ENCODE measurements at regions of chr16 and their contacts with region 1.

Region 1: DNA sequence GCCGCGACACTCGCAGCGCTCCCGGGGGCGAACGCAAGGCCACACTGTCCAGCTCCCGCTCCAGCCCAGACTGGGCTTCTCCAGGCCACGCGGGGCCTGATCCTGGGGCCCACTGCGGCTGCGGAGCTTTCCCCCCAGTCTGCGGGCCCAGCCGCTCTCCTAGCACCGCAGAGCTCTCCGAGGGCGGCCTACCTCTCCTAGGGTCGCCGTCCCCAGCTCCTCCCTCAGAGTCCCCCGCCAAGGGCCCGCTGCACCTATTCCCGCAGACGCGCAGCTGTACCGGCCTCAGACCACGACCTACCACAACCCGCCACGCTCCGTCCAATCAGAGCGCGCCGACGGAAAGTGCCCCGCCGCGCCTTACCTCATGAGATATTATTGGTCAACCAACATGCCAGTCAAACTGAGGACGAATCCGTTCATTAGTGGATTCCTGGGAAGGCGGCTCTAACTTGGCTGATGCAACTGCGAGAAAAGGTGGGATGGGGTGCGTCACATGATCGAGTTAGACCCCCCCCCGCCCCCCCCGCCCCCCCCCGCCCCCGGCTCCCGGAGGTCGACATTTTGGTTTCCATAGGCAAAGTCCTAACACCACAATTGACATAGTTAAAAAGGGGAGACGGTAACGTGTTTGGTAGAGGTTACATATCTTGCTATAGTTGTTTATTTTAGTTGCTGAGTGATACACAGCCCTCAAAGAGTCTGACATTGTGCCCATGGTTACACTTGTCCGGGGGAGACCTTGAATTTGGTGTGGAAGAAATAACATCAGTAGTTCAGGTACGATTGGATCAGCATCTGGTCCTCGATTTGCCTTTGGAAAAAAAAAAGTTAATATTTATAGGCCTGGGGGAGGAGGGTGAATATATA is at the start of gene AARS1:
- DNase-seq: peak; percentile 100
- H3K4me3 ChIP-seq: peak within 1 kb of the TSS; percentile 79 to 95 (median 84)
- H3K27ac ChIP-seq: peak within 1 kb of the TSS; percentile 93 to 99 (median 96)
- H3K4me1 ChIP-seq: peaks cover 13 to 34% (median 30%) of the 10 kb centered on the region in 4 donors
- H3K27me3 ChIP-seq: no peaks in the 10 kb centered on the region
- CTCF ChIP-seq: peak in 1 of 3 experiments; percentile 4
- EP300 ChIP-seq: no peak
- POLR2A ChIP-seq: peak; percentile 87
- total RNA-seq, gene AARS1: 67.1 to 101 (median 87.2) TPM

Region 2: DNA sequence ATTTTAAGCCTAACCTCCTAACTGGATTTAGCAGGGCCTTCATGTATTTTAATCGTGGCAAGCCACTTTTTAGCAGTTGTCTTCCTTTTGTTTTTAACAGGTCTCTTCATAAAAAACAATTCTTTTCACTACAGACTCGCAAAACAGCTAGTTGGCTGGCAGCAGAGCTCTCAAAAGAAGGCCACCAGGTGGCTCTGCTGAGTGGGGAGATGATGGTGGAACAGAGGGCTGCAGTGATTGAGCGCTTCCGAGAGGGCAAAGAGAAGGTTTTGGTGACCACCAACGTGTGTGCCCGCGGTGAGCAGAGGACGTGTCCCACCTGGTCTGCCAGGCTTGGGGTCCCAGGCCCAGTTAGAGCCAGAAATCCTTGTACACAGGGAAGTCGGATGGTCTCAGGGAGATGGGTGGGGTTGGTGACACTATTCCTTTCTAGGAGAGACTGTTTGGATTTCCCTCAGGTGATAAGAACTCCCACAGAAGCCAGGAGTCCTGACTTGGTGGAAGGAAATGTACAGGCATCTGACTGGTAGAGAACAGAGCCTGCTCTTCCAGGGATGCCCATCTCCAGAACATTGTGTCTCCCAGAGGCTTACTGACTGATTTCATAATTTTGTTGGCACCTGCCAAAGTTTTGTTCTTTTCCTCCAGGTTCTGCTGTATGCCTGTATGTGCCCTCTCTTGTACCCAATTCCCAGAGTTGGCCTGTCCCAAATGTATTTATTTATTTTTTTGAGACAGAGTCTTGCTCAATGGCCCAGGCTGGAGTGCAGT is 42.3 kb after region 1 on chr16:
- intact Hi-C with region 1: no loop called
- DNase-seq: no peak
- H3K4me3 ChIP-seq: no peak overlapping the region
- H3K27ac ChIP-seq: peak overlapping the region in 3 of 4 donors; percentile 12 to 68 (median 57)
- H3K4me1 ChIP-seq: peaks cover 0 to 18% (median 2%) of the 10 kb centered on the region in 4 donors
- H3K27me3 ChIP-seq: no peaks in the 10 kb centered on the region
- CTCF ChIP-seq: peak in 2 of 3 experiments; percentile 32 to 56
- EP300 ChIP-seq: no peak
- POLR2A ChIP-seq: no peak

Region 3: GRCh38 chr16:70342016-70342415 is 52.6 kb after region 1 on chr16:
- intact Hi-C with region 1: loop called (anchors 10 kb)
- DNase-seq: no peak
- H3K4me3 ChIP-seq: no peak overlapping the region
- H3K27ac ChIP-seq: no peak overlapping the region
- H3K4me1 ChIP-seq: peaks cover 4 to 14% (median 9%) of the 10 kb centered on the region in 4 donors
- H3K27me3 ChIP-seq: no peaks in the 10 kb centered on the region
- CTCF ChIP-seq: no peak
- EP300 ChIP-seq: no peak
- POLR2A ChIP-seq: no peak